ENCODE measurements at regions of chr9 and their contacts with region 1.

Region 1: GRCh38 chr9:101458955-101459631 is 23.5 kb upstream of the ALDOB start:
- DNase-seq: peak; percentile 71
- ATAC-seq: peak; percentile 89
- H3K4me3 ChIP-seq: no peak overlapping the region
- H3K27ac ChIP-seq: no peak overlapping the region
- H3K4me1 ChIP-seq: no peaks in the 10 kb centered on the region
- H3K27me3 ChIP-seq: no peaks in the 10 kb centered on the region
- CTCF ChIP-seq: peak; percentile 72

Region 2: DNA sequence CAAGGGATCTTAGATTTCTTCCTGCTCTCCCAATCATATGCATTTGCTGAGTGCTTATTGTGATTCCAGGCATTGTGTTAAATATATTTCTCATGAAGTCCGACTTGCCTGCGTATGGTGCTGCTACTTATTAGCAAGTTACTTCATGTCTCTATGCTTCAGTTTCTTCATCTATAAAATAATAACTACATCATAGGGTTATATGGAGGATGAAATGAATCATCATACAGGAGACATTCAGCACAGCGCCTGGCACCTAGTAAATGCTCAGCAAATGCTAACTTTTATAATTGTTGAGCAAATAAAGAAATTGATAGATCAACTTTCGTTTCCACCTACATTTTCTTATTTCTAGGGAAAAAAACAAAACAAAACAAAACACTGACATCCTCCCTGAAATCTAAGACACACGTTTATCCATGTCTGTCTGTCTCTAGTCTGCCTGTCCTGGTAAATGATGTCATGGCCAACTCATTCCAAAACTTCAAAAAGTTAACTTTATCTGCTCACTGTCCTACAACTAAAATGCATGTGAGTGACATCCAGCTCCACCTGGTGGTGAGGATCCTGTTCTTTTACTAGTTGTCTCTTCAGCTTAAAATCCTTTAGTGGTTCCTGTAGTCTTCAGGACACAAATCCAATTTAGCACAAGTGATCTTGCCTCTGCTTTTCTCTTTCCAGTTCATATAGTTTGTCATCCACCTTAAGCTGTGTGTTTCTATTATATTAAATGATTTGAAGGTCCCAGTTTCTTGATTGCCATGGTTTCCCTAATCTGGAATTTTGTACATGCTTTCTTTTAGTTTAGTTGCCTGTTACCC is 108.0 kb after region 1 on chr9:
- CTCF ChIA-PET with region 1: no interaction called
- POLR2A ChIA-PET with region 1: no interaction called
- intact Hi-C with region 1: loop called (anchors 1 kb)
- DNase-seq: peak; percentile 59
- ATAC-seq: peak; percentile 50
- H3K4me3 ChIP-seq: no peak overlapping the region
- H3K27ac ChIP-seq: no peak overlapping the region
- H3K4me1 ChIP-seq: no peaks in the 10 kb centered on the region
- H3K27me3 ChIP-seq: no peaks in the 10 kb centered on the region
- CTCF ChIP-seq: peak; percentile 68

Measured in PC-3 (cell line).